ENCODE measurements at regions of chr2 and their contacts with region 1.

Region 1: DNA sequence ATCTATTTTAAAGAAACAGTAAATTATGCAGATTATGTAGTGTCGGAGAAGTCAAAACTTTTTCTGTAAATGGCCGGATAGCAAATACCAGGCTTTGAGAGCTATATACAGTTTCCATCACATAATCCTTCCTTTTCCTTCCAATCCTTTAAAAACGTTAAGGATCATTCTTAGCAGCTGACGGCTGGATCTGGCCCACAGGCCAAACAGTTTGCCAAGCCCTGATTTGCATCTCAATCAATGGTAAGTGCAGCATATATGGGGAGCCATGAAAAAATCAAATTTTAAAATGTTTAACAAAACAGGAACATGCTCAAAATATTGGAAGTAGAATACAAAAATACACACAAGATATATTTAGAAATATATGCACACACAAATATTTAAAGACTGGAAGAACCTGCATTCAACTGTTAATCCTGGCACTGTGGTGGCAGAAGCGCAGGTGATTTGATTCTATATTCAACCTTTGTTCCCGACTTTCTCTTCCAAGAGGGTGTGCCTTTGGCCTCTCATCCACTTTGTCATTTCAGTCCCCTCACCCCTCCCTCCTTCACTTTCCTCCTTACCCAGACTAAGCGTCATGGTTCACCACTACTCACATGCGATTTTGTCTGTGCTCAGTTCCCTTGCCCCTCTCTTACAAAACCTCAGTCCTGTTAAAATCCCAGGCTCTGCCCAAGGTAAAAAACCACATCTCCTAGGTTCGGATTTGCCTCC is 27.3 kb downstream of the NDUFA10 start:
- DNase-seq: no peak
- H3K4me3 ChIP-seq: no peak overlapping the region
- H3K27ac ChIP-seq: no peak overlapping the region
- H3K27me3 ChIP-seq: no peaks in the 10 kb centered on the region
- CTCF ChIP-seq: no peak

Region 2: GRCh38 chr2:239979243-239980023 is 18.4 kb before region 1 on chr2:
- CTCF ChIA-PET with region 1: interaction called, 18 read pairs
- POLR2A ChIA-PET with region 1: no interaction called
- DNase-seq: no peak
- H3K4me3 ChIP-seq: no peak overlapping the region
- H3K27ac ChIP-seq: no peak overlapping the region
- H3K27me3 ChIP-seq: no peaks in the 10 kb centered on the region
- CTCF ChIP-seq: peak; percentile 26; the same call in 1 of the 2 replicates

Region 3: GRCh38 chr2:240021488-240022104 is 23.8 kb after region 1 on chr2:
- CTCF ChIA-PET with region 1: interaction called, 14 read pairs
- POLR2A ChIA-PET with region 1: interaction called, 7 read pairs
- DNase-seq: peak; percentile 11
- H3K4me3 ChIP-seq: no peak overlapping the region
- H3K27ac ChIP-seq: no peak overlapping the region
- H3K27me3 ChIP-seq: no peaks in the 10 kb centered on the region
- CTCF ChIP-seq: peak; percentile 85

Measured in AG04450 (cell line).